Activated T-helper 2 cell treated with anti-CD3 and anti-CD28 coated beads, Interferon-gamma antibody, Interleukin-2, Interleukin-4, amounts not matched to agents 10 μg/mL and 5 μg/mL and 100 μg/mL, durations not matched to agents 14 hours and 24 hours and 36 hours (primary cell): ENCODE measurements at regions of chr2 and their contacts with region 1.

Region 1: GRCh38 chr2:70656421-70657010 is 102.9 kb upstream of the TGFA start:
- DNase-seq: no peak
- H3K4me3 Mint-ChIP-seq: no peak overlapping the region
- H3K27ac Mint-ChIP-seq: no peak overlapping the region
- H3K4me1 Mint-ChIP-seq: peaks cover 15% of the 10 kb centered on the region
- H3K27me3 Mint-ChIP-seq: peaks cover 27% of the 10 kb centered on the region

Region 2: DNA sequence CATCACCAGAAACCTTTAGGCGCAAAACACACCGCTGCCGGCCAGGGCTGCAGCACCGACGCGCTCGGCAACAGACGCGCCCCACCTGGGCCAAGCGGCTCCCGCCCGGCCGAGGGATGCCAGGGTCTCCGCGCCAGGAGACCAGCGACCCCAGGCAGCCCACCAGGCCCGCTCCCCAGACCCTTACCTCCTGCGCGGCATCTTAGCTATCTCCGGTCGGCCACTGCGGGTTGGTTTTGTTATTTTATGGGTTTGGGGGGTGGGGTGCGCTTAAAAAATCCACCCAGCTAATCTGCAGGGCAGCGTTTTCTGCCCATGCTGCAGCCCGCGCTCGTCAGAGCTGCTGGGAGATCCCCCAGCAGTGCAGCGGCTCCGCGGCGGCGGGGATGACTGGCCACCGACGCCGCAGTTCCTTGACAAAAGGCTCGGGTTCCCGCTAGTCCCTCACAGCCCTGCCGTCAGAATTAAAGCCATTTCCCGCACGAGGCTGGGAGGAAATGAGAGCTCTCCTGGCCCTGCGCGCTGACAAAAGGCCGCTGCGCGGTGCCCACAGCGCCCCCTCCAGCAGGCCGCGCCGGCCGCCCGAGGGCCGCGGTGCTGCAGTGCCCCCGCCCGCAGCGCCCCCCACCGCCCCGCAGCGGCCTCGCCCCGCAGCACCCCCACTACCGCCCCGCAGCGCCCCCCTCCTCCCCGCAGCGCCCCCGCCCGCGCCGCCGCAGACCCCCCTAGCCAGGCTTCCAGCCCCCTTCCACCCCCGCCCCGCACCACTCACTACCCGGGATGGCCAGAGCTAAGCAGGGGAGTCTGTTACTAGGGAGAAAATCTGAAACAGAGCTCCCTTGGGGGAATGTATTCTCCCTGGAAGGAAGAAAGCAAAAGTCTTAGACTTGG is 111.4 kb after region 1 on chr2 and contains the start of gene ADD2:
- intact Hi-C with region 1: loop called (anchors 5 kb)
- DNase-seq: peak; percentile 32
- H3K4me3 Mint-ChIP-seq: peak within 1 kb of the TSS; percentile 83
- H3K27ac Mint-ChIP-seq: peak within 1 kb of the TSS; percentile 49
- H3K4me1 Mint-ChIP-seq: peaks cover 16% of the 10 kb centered on the region
- H3K27me3 Mint-ChIP-seq: peaks cover 65% of the 10 kb centered on the region
- total RNA-seq, gene ADD2: 3.1 and 3.2 TPM in 2 replicates

Region 3: DNA sequence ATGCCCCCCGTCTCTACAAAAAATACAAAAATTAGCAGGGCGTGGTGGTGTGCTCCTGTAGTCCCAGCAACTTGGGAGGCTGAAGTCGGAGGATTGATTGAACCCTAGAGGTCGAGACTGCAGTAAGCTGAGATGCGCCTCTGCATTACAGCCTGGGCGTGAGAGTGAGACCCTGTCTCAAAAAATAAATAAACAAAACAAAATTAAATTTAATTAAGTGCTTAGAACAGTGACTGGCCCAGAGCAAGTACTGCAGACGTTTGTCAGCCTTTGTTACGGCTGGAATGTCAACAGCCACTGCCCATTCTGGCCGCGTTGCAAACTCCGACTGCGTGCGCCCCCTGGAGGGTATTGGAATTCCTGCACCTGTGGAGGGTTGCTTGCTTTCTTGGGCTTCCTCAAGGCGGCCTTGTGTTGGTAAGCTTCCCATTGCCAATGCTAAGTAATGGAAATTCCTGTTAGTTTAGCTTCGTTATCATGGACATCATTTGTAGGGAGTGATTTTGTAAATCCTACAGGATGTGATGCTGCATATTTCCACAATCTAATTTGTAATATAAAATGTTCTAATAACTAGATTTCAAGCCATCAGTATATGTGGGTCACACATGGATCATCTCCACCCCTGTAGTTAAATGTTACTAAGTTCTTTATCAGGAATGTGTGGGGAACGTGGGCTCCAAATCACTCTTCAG is 263.3 kb after region 1 on chr2:
- intact Hi-C with region 1: loop called (anchors 10 kb)
- DNase-seq: peak; percentile 51
- H3K4me3 Mint-ChIP-seq: no peak overlapping the region
- H3K27ac Mint-ChIP-seq: no peak overlapping the region
- H3K4me1 Mint-ChIP-seq: no peaks in the 10 kb centered on the region
- H3K27me3 Mint-ChIP-seq: peaks cover 14% of the 10 kb centered on the region